Right ventricle myocardium superior (tissue), 1 donor: ENCODE measurements at regions of chr10 and their contacts with region 1.

Region 1: DNA sequence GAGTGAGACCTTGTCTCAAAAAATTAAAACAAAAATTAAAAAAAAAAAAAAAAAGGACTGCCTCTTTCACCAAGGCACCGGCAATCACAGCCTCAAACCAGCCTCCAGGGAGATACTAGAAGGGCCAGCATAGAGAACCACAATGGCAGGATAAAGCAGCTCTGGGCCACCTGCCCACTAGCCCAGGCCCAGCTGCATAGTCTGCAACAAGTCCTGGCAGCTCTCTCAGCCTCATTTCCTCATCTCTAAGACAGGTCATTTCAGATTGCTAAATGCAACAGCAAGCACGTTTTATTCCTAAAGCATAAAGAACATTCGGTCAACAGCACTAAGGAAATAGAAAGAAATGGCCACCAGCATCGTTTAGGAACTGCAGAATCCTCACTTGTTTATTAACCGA is 28.8 kb downstream of the XPNPEP1 start:
- DNase-seq: peak; percentile 88
- ATAC-seq: peak; percentile 80

Region 2: DNA sequence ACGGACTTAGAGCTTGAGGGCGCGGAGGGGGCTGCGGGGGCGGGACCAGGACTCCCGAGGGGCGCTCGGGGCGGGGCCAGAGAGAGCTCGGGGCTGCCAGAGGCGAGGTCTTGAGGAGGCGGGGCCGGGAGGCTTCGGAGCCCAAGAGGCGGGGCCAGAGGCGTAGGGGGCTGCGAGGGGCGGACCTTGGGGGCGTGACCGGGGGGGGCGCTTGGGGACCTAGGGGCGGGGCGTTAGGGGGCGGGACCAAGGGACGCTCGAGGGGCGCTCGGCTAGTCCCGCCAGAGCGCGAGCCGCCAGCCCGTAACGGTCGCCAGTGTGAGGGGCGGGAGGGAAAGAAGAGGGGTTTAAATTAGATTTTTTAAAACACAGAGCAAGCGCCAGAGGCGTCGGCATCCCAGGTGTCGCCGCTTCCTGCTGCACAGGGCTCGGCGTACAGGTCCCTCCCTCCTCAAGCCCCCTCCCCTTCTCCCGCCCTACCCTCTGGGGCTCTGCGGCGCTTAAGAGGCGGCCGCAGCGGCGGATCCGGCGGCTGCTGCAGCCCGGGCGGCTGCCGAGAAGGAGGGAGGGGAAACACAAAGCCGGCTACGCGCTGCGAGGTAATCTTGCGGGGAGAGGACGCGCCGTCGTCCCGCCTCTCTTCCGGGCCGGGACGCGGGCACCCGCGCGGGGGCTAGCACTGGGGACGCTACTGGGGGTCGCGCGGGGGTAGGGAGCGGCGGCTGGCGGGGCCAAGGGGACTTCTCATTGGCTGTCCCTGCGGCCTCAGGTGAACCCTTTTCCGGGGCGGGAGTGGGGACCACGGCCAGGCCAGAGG is 113.4 kb after region 1 on chr10 and contains the start of gene ADD3:
- intact Hi-C with region 1: loop called (anchors 10 kb)
- DNase-seq: peak; percentile 97
- ATAC-seq: peak; percentile 91
- total RNA-seq, gene ADD3: 115 TPM

Region 3: DNA sequence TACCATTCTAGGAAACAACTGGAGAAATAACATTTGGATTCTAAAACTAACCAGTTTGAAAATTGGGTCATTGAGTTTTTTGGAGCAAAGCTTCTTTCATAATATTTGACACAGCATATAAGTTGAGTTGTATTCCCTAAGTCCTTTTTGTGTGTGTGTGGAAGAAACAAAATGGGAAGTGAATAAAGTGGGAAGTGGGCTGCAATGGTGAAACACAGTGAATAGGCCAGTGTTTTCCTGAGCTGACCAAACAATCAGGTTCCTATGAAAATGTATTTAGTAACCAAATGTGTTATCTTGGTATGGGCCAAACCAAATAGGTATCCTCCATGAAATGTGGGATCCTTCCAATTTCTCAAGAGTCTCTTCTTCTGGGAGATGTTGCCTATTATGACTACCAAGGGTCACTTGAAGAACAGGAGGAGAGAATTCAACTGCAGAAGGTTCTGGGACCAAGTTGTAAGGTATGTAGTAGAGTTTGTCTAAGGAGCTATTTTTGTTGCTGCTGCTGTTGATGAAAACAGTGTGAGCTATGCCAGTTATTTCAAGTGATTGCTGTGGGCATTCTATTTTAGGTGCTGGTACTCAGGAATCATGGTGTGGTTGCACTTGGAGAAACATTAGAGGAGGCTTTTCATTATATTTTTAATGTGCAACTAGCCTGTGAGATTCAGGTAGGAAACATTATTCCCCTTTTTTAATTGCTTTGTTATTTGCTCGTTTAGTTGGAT is 224.5 kb after region 1 on chr10:
- intact Hi-C with region 1: loop called (anchors 5 kb)
- DNase-seq: no peak
- ATAC-seq: peak; percentile 94

Region 4: DNA sequence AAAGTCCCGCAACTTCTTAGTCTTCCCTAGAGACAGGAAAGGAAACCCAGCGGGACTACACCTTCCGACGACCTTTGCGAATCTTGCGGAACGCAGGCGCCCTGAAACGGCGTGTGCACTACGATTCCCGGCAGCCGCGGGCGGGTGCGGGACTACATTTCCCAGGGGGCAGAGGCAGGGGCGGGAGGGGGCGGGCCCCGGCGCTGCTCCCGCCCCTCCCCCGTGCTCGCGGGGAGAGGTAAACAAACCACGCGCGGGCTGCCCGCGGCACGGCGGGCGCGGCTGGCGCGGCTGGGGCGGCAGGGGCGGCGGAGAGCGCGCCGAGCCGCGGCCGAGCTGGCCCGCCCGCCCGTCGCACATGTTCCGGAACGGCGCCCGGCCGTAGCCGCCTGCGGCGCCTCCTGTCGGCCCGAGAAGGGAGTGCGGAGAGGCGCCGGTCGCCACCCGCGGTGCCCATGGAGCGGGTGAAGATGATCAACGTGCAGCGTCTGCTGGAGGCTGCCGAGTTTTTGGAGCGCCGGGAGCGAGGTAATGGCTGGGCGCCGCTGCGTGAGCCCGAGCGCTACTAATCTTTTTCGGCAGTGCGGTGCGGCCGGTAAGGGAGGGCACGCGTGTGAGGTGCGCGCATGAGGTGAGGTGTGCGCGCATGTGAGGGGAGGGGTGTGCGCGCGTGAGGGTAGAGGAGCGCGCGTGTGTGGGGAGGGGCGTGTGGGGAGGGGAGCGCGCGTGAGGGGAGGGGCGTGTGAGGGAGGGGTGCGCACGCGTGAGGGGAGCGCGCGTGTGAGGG is 331.4 kb after region 1 on chr10:
- intact Hi-C with region 1: loop called (anchors 10 kb)
- DNase-seq: peak; percentile 93
- ATAC-seq: peak; percentile 74